ENCODE measurements at regions of chr20 and their contacts with region 1.

Region 1: GRCh38 chr20:13654463-13655023 is 15.8 kb upstream of the TASP1 start:
- DNase-seq: no peak

Region 2: GRCh38 chr20:13784893-13785715 is 130.6 kb after region 1 on chr20 and contains the starts of genes ESF1 and NDUFAF5:
- intact Hi-C with region 1: loop called (anchors 5 kb)
- DNase-seq: peak; percentile 96
- total RNA-seq, gene ESF1: 15.1 TPM
- total RNA-seq, gene NDUFAF5: 65.0 TPM